ENCODE measurements at regions of chr18 and their contacts with region 1.

Region 1: GRCh38 chr18:46660955-46661749 is 4.1 kb upstream of the LOXHD1 start:
- DNase-seq: no peak
- ATAC-seq: no peak
- H3K4me3 Mint-ChIP-seq: no peak overlapping the region
- H3K27ac Mint-ChIP-seq: no peak overlapping the region
- H3K4me1 Mint-ChIP-seq: no peaks in the 10 kb centered on the region
- H3K27me3 Mint-ChIP-seq: no peaks in the 10 kb centered on the region

Region 2: GRCh38 chr18:46148810-46149209 is 512.3 kb before region 1 on chr18:
- CTCF ChIA-PET with region 1: interaction called, 21 read pairs
- POLR2A ChIA-PET with region 1: no interaction called
- intact Hi-C with region 1: loop called (anchors 1 kb)
- DNase-seq: peak; percentile 59
- ATAC-seq: peak; percentile 77
- H3K4me3 Mint-ChIP-seq: no peak overlapping the region
- H3K27ac Mint-ChIP-seq: no peak overlapping the region
- H3K4me1 Mint-ChIP-seq: peaks cover 23% of the 10 kb centered on the region
- H3K27me3 Mint-ChIP-seq: no peaks in the 10 kb centered on the region

Region 3: DNA sequence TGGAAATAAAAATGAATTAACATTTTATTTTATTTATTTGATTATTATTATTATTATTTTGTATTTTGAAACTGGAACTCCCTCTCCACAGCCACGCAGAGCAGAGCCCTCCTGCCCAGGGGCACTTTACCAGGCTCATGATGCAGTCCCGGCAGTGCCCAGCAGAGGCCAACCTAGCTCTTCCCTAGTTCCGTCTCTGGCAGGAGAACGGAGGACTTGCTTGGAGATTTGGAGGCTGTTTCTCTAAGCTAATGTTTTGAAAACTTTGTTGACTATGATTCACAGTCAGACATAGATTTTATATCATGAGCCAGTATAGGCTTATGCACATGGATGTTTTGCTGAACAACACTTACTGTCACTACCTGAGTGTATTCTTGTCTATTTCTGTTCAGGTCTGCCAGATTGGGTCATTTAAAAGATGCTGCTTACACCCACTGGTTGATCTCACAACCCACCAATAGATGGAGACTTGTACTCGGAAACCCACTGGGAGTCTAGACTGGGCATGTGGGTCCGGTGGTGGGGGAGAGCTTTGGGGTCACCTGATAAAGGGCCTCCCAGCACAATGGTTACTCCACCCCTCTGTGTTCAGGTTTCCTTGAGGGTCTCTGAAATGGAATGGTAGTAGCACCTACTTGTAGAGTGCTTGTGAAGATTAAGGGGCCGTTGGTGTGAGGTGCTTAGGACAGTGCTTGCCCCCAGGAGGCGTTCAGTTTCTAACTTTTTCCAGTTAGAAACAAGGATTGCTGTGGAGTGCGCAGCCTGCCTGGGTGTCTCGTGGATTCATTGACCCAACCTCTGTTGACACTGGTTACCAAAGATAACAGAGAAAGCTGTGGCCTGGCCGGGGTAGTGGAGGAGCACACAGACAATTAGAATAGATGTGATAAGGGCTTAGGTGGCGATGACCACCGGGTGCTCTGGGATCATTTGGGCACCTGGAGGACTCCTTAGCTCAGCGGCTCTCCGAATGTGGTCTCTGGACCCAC is 379.7 kb before region 1 on chr18:
- CTCF ChIA-PET with region 1: interaction called, 84 read pairs
- POLR2A ChIA-PET with region 1: no interaction called
- intact Hi-C with region 1: loop called (anchors 1 kb)
- DNase-seq: peak; percentile 80
- ATAC-seq: peak; percentile 87
- H3K4me3 Mint-ChIP-seq: no peak overlapping the region
- H3K27ac Mint-ChIP-seq: no peak overlapping the region
- H3K4me1 Mint-ChIP-seq: peaks cover 11% of the 10 kb centered on the region
- H3K27me3 Mint-ChIP-seq: no peaks in the 10 kb centered on the region

Region 4: DNA sequence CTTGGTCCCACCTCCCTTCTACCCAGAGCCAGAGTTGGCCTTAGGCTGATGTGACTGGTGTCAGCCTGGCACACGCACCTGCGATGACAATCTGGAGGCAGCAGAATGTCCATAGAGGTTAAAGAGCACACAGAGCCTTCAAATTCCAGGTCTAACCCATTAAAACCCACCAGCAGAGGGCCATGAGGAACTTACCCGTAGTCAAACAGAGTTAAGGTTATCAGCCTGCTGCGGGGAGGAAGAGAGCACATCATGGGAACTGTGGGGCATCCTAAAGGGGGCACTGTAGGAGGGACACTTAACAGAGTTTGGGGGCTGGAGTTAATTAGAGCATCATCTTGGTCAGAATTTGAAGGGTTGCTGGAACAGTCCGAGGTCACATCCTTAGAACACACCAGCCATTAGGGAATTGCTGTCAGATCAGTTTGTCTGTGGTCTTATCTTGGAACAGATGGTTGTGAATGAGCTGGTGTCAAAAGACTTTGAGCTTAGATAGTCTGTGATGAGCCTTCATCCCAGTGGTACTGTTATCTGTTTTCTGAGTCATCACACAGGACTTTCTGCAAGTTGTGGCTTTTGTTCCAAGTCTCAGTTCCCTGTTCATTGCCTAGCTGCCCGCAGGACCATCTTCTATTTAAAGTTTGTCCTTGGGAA is 252.7 kb before region 1 on chr18:
- CTCF ChIA-PET with region 1: interaction called, 3 read pairs
- POLR2A ChIA-PET with region 1: no interaction called
- intact Hi-C with region 1: loop called in 1 of 2 experiments (anchors 10 kb)
- DNase-seq: no peak
- ATAC-seq: no peak
- H3K4me3 Mint-ChIP-seq: no peak overlapping the region
- H3K27ac Mint-ChIP-seq: no peak overlapping the region
- H3K4me1 Mint-ChIP-seq: no peaks in the 10 kb centered on the region
- H3K27me3 Mint-ChIP-seq: peaks cover 4% of the 10 kb centered on the region

Region 5: DNA sequence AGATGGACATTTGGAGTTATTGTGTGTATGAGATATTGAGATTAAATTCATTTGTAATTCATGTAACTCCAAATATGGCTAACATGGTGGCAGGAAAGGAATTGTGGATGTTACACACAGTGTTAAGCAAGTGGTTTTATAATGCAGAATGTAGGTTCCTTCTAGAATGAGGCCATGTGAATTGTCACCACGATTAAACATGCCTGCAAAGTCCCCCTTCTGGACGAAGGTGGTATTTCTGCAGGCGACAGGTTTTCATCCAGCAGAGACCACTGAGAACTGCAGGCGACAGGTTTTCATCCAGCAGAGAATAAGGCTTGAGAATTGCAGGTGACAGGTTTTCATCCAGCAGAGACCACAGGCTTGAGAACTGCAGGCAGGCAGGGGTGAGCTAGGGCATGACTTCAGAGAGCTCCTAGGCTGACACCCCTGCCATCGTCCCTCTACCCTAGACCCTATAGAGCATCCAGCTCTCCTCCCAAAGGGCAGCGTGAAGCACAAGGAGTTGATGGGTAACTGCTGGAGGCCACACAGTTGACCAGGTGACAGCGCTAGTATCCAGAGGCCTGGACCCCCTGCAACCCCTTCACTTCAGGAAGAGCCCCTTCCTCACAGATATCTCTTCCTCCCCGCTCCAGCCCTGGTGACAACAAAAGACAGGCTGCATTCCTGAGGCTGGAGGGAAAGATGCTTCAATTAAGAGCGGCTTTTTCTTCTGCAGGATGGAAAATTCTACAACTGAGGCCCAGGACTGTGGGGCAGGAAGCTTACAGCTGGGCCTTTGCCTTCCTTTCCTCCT is 179.9 kb before region 1 on chr18:
- CTCF ChIA-PET with region 1: interaction called, 8 read pairs
- POLR2A ChIA-PET with region 1: no interaction called
- intact Hi-C with region 1: loop called in 1 of 2 experiments (anchors 5 kb)
- DNase-seq: peak; percentile 71
- ATAC-seq: peak; percentile 42
- H3K4me3 Mint-ChIP-seq: no peak overlapping the region
- H3K27ac Mint-ChIP-seq: no peak overlapping the region
- H3K4me1 Mint-ChIP-seq: no peaks in the 10 kb centered on the region
- H3K27me3 Mint-ChIP-seq: peaks cover 2% of the 10 kb centered on the region

Region 6: GRCh38 chr18:46555724-46556123 is 105.4 kb before region 1 on chr18:
- CTCF ChIA-PET with region 1: interaction called, 15 read pairs
- POLR2A ChIA-PET with region 1: no interaction called
- intact Hi-C with region 1: loop called (anchors 1 to 5 kb)
- DNase-seq: peak; percentile 30
- ATAC-seq: peak; percentile 49
- H3K4me3 Mint-ChIP-seq: no peak overlapping the region
- H3K27ac Mint-ChIP-seq: no peak overlapping the region
- H3K4me1 Mint-ChIP-seq: no peaks in the 10 kb centered on the region
- H3K27me3 Mint-ChIP-seq: no peaks in the 10 kb centered on the region

Region 7: GRCh38 chr18:46672062-46672970 is 11.2 kb after region 1 on chr18:
- CTCF ChIA-PET with region 1: interaction called, 14 read pairs
- POLR2A ChIA-PET with region 1: no interaction called
- intact Hi-C with region 1: no loop called
- DNase-seq: no peak
- ATAC-seq: peak; percentile 79
- H3K4me3 Mint-ChIP-seq: no peak overlapping the region
- H3K27ac Mint-ChIP-seq: peak overlapping the region; percentile 42
- H3K4me1 Mint-ChIP-seq: peaks cover 16% of the 10 kb centered on the region
- H3K27me3 Mint-ChIP-seq: peaks cover 2% of the 10 kb centered on the region

Measured in activated CD4-positive, alpha-beta T cell treated with anti-CD3 and anti-CD28 coated beads for 36 hours (primary cell).